ENCODE measurements at regions of chr1 and their contacts with region 1.

Region 1: DNA sequence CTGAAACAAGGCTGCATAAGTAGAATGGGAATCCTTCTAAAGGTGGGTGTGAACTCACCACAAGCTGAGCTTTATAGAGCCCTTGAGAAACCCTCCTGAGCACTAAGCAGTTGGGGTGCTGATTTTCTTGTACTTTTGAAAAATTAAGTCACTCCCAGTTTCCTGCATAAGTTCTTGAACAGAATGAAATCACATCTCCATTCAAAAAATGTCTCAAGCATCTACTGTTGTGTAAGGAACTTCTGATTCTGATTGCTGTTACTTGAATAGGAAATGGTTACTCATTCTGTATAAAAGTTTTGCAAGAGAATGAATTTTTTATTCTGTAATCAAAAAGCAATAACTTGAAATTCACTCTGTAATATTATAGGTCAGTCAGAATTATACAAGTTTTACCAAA is 50.8 kb upstream of the WNT2B start:
- DNase-seq: no peak
- H3K4me3 ChIP-seq: no peak overlapping the region
- H3K27ac ChIP-seq: no peak overlapping the region
- H3K4me1 ChIP-seq: peaks cover 13% of the 10 kb centered on the region
- H3K27me3 ChIP-seq: no peaks in the 10 kb centered on the region
- CTCF ChIP-seq: no peak

Region 2: DNA sequence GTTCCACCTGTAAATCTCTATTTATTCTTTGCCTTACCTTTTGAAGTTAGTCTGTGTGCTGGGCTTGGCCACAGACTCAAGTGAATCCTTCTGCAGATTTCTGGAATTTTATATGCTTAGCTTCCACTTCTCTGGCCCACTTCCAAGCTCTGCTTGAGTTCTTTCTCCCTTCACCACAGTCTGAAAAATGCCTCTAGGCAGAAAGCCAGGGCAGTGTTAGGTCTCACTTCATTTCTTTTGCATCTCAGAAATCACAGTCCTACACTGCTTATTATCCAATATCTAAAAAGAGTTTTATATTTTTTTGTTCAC is 767.7 kb before region 1 on chr1:
- CTCF ChIA-PET with region 1: no interaction called
- POLR2A ChIA-PET with region 1: no interaction called
- intact Hi-C with region 1: no loop called
- DNase-seq: peak in 1 of 2 experiments; percentile 24
- H3K4me3 ChIP-seq: no peak overlapping the region
- H3K27ac ChIP-seq: 0 out of 2 replicates have a peak overlapping the region, but pooled peaks have one; percentile 1
- H3K4me1 ChIP-seq: no peaks in the 10 kb centered on the region
- H3K27me3 ChIP-seq: no peaks in the 10 kb centered on the region
- CTCF ChIP-seq: no peak

Region 3: DNA sequence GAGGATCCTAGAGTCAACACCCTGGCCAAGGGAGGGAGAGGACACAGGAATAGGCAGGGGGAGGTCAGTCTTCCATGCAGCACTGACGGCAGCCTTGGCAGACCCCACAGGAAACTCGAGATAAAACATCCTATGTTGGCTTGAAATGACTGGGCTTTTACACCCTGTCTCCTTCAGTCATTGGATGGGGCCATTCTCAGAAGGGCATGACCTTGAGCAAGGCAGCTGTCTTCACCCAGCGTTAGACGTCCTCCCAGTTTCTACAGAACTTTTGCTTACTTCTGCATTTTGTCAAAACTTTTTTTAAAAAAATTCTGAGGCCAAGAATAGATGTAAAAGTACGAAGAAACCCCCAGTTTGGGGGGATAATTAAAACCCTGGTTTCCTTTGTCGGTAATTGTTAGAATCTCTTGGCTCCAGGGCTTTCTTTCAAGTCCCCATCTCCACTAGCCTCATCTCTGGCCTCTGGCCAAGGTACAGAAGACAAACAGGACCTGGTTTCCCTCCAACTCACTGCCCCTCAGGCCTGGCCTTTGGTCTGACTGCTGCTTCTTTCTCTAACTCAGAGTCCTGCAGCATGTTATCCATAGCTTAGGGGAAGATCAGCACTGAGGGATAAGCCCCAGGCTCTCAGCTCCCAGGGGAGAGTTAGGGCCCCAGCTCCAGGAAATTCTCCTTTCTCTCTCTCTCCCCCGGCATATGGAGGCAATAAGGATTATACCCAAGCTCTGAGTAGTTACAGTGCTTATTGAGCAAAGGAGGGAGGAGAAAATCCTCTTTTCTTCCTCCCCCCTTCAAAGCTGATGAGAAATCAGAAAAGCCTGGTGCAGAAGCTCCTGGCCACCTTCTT is 416.8 kb before region 1 on chr1:
- CTCF ChIA-PET with region 1: no interaction called
- POLR2A ChIA-PET with region 1: no interaction called
- intact Hi-C with region 1: no loop called
- DNase-seq: no peak
- H3K4me3 ChIP-seq: no peak overlapping the region
- H3K27ac ChIP-seq: no peak overlapping the region
- H3K4me1 ChIP-seq: no peaks in the 10 kb centered on the region
- H3K27me3 ChIP-seq: peaks cover 72% of the 10 kb centered on the region
- CTCF ChIP-seq: no peak

Region 4: DNA sequence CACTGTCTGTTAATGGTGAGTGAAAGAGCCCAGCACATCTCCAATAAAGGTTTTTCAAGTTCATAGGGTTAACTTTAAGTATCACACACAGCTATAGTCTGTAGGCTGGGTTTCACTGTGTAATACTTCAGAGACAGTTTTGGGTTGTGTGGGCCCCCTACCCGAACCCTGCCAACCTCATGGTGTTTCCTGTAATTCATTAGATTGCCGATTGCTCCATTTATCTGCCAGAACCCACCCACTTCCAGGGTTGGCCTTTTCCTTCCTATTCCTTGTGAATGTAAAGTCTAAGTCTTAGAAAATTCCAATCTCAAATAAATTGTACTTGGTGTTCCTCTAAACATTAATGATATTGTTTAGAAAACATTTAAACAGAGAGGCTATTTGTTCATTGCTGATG is 18.4 kb before region 1 on chr1:
- CTCF ChIA-PET with region 1: no interaction called
- POLR2A ChIA-PET with region 1: no interaction called
- intact Hi-C with region 1: no loop called
- DNase-seq: no peak
- H3K4me3 ChIP-seq: no peak overlapping the region
- H3K27ac ChIP-seq: no peak overlapping the region
- H3K4me1 ChIP-seq: no peaks in the 10 kb centered on the region
- H3K27me3 ChIP-seq: no peaks in the 10 kb centered on the region
- CTCF ChIP-seq: no peak

Region 5: DNA sequence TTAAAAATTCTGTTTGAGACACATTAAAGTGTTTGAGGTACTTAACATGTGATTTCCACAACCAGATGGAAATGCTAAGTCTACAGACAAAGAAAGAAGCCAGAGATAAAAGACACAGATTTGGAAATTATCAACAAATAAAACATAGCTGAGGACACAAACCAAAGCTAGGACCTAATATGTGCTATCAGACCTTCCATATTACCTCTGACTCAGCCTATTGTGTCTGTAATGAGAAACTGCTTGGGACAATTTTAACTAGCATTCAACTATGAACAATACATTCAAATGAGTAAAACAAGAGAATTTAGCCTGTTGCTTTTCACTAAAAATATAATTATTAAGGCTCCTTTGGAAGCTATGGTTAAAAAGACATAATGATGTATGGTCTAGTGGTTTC is 105.4 kb after region 1 on chr1:
- CTCF ChIA-PET with region 1: interaction called, 11 read pairs
- POLR2A ChIA-PET with region 1: no interaction called
- intact Hi-C with region 1: no loop called
- DNase-seq: no peak
- H3K4me3 ChIP-seq: no peak overlapping the region
- H3K27ac ChIP-seq: no peak overlapping the region
- H3K4me1 ChIP-seq: no peaks in the 10 kb centered on the region
- H3K27me3 ChIP-seq: no peaks in the 10 kb centered on the region
- CTCF ChIP-seq: no peak

Measured in PC-9 (cell line).